Breast epithelium (tissue), 4 donors: ENCODE measurements at regions of chr21 and their contacts with region 1.

Region 1: GRCh38 chr21:15729674-15730483 is at the start of gene USP25:
- DNase-seq: peak; percentile 85 to 88
- H3K4me3 ChIP-seq: peak within 1 kb of the TSS; percentile 90 to 93 (median 92)
- H3K27ac ChIP-seq: peak within 1 kb of the TSS; percentile 96 to 99
- H3K4me1 ChIP-seq: no peaks in the 10 kb centered on the region
- H3K27me3 ChIP-seq: no peaks in the 10 kb centered on the region
- CTCF ChIP-seq: peak in 1 of 3 donors; percentile 38
- POLR2A ChIP-seq: no peak
- total RNA-seq, gene USP25: 52.8 to 78.4 (median 53.0) TPM

Region 2: DNA sequence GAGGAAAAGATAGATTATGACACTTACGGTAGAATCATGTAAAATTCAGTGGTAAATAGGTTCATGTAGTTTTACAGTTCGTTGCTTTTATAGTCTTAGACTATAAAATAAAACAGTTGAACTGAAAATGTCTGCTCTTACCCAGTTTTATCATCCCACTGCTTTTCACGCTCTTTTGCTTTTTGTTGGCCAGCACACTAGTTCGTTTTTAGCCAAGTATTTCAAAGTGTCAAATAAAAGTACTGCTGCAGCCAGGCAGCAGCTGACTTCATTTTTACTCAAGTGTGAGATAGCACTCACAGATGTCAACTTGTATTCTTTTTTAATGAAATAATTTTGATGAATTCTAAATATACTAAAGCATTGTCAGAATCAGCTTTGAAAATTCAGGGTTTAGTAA is 1901.3 kb after region 1 on chr21:
- intact Hi-C with region 1: loop called (anchors 10 kb)
- DNase-seq: no peak
- H3K4me3 ChIP-seq: no peak overlapping the region
- H3K27ac ChIP-seq: no peak overlapping the region
- H3K4me1 ChIP-seq: no peaks in the 10 kb centered on the region
- H3K27me3 ChIP-seq: no peaks in the 10 kb centered on the region
- CTCF ChIP-seq: no peak
- POLR2A ChIP-seq: no peak